HAP-1 (cell line): ENCODE measurements at regions of chr9 and their contacts with region 1.

Region 1: GRCh38 chr9:72038890-72039410 is 21.5 kb downstream of the C9orf57 start:
- DNase-seq: peak; percentile 85 to 86
- H3K4me3 ChIP-seq: no peak overlapping the region
- H3K4me1 ChIP-seq: no peaks in the 10 kb centered on the region
- H3K27me3 ChIP-seq: no peaks in the 10 kb centered on the region

Region 2: DNA sequence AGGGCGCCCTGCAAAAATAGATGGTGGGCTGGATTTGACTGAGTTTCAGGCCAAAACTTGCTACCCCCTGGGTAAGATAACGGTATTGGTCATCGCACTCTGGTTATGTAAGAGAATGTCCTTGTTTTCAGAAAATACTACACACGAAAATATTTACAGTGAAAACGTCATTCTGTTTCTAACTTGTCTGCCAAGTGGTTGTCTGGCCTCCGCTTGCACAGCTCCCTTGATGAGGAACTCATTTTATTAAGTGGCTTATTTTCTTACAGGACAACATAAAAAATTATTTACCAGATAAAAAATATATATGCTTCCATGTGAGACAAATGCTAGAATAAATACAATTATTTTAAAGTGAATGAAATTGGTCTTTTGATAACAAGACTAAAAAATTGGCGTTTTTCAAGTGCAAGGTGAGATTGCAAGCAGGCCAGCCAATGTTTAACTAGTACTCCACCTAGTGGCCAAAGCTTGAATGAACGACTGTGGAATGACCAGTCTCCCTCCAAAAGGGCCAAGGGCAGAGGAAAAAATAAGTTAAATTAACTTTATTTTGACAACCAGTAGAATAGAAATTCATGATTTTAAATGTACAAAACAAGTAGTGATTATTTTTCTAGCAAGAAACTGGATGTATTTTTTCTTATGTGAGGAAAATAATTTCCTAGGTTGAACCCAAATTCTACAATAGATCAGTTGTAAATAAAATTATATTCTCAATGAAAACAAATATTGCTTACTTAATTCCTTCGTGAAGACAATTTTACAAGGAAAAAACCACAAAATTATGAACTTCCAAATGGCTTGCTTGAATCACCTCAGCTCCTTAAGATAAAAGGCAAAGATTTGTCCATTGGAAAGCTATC is 232.9 kb after region 1 on chr9:
- in situ Hi-C with region 1: loop called (anchors 5 kb)
- DNase-seq: peak; percentile 54 to 80
- H3K4me3 ChIP-seq: no peak overlapping the region
- H3K4me1 ChIP-seq: no peaks in the 10 kb centered on the region
- H3K27me3 ChIP-seq: no peaks in the 10 kb centered on the region

Region 3: DNA sequence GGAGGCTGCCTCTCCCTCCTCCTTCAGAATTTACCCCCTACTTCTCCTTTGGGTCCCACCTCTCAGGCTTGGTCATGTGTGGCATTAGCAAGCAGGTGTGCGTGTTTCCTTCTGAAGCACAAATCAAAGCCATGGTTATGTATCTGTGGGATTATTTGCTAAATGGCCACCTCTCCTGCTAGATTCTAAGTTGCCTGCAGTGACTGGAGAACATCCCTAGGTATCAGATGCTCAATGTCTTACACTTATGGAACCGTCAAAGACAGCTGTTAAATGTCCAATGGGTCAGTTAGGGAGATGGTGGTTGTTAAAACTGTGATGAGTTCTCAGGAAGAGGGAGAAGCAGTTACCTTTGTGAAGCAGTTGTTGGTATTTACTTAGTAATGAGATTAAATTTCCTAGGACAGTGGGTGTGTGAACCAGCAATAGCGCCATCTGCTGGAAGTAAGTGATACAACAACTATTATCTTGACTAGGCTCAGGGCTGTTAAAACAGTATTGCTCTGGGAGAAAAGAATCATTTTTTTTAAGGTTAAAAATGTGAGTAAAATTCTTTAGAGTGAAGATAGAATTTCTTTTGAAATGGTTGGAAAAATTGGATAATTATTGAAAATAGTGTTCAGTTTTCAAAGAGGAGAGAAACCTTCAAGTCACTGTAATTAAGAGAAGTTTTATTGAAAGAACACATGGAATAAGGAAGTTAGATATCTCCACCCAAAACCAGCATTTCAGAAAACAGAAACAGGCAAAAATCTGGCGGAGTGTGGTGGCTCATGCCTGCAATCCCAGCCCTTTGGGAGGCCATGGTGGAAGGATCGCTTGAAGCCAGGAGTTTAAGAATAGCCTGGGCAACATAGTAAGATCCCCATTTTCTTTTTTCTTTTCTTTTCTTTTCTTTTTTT is 553.8 kb after region 1 on chr9:
- in situ Hi-C with region 1: loop called (anchors 25 kb)
- DNase-seq: peak; percentile 46 to 80
- H3K4me3 ChIP-seq: no peak overlapping the region
- H3K4me1 ChIP-seq: peaks cover 43% of the 10 kb centered on the region
- H3K27me3 ChIP-seq: no peaks in the 10 kb centered on the region

Region 4: DNA sequence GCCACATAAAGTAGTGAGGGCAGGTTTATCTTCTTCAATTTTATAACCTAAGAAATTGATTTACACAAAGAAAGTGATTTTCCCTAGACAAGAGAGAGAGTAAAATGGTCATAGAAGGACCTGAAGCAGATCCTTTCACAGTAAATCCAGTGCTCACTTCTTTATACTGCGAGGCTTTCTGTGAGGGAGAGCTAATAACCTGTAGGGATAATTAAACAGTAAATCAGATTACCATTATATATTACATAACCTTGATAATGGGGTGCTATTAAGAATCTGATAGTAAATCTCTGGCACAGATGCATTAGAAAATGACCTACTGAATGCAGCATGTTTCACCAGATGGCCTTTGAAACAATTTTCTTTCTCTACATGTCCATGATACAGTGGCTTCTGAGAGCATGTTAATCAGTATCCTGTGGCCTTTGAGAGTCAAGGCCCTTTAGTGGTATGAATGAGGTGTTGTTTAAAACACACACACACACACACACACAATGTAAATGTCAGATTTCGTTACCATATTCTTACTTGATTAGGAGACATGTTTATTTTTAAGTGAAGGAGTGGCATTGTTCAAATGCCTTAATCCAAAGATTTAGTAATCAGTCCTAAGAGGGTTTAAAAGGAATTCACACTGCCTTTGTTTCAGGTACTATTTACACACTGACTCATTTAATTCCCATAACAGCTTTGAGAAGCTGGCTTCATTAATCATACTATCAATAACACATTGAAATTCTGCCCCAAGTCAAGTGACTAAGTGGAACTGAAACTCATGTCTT is 789.2 kb after region 1 on chr9:
- in situ Hi-C with region 1: loop called (anchors 10 kb)
- DNase-seq: peak; percentile 28 to 92
- H3K4me3 ChIP-seq: no peak overlapping the region
- H3K4me1 ChIP-seq: peaks cover 32% of the 10 kb centered on the region
- H3K27me3 ChIP-seq: no peaks in the 10 kb centered on the region

Region 5: GRCh38 chr9:73038613-73039012 is 999.7 kb after region 1 on chr9:
- in situ Hi-C with region 1: loop called (anchors 25 kb)
- DNase-seq: no peak
- H3K4me3 ChIP-seq: no peak overlapping the region
- H3K4me1 ChIP-seq: no peaks in the 10 kb centered on the region
- H3K27me3 ChIP-seq: no peaks in the 10 kb centered on the region

Region 6: DNA sequence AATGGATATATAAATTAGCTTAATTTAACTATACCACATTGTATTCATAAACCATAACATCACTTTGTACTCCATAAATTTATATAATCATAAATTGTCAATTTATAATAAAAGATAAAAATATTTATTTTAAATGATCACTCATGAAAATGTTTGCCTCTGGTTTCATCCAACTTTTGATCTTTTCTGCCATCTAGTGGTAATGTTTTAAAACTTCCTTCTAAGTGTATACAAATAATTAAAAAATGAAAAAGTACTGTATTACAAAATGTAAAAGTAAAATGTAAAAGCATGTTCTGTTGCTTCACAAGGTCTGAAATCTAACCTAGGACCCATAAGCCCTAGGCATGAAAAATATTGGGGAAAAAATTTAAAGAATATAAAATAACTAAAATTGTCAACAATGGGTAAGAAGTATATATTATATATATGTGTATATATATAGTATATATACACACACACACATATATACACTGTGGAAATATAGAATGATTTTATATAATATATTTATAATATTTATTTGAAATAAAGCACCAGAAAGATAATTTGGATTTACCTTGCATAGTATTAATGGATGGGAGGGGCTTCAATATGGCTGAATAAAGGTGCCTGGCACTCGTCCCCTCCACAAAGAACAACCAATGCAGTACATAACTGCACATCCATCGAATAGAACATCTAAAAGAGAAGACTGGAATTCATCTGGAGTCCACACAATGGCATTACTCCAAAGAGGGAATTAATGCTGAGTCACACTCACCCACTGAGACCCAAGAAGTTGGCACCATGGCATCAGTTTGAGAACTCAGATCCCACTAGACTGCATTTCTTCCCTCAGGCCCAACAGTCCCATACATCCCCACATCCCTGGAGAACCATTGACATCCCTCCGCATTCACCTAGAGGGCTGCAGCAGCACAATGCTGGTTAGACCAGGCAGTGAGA is 1145.2 kb after region 1 on chr9:
- in situ Hi-C with region 1: loop called (anchors 25 kb)
- DNase-seq: peak in 1 of 2 experiments; percentile 57
- H3K4me3 ChIP-seq: no peak overlapping the region
- H3K4me1 ChIP-seq: peaks cover 12% of the 10 kb centered on the region
- H3K27me3 ChIP-seq: no peaks in the 10 kb centered on the region